Sciatic nerve (tissue), 2 donors: ENCODE measurements at regions of chrX and their contacts with region 1.

Region 1: GRCh38 chrX:138651494-138651893 is 60.0 kb downstream of the FGF13 start:
- DNase-seq: no peak
- ATAC-seq: no peak

Region 2: GRCh38 chrX:139844884-139845283 is 1193.4 kb after region 1 on chrX:
- intact Hi-C with region 1: loop called (anchors 5 kb)
- DNase-seq: no peak
- ATAC-seq: no peak